Ovary (tissue), 10 donors: ENCODE measurements at regions of chr9 and their contacts with region 1.

Region 1: GRCh38 chr9:69027355-69028096 is 8.0 kb upstream of the FXN start:
- DNase-seq: no peak
- H3K4me3 ChIP-seq: no peak overlapping the region
- H3K27ac ChIP-seq: no peak overlapping the region
- H3K4me1 ChIP-seq: no peaks in the 10 kb centered on the region
- H3K27me3 ChIP-seq: no peaks in the 10 kb centered on the region
- CTCF ChIP-seq: peak; percentile 25 to 30 (median 29)
- EP300 ChIP-seq: no peak
- POLR2A ChIP-seq: no peak

Region 2: GRCh38 chr9:68584189-68585033 is 443.1 kb before region 1 on chr9:
- intact Hi-C with region 1: loop called in 1 of 4 experiments (anchors 10 kb)
- DNase-seq: peak; percentile 59 to 78 (median 74)
- H3K4me3 ChIP-seq: no peak overlapping the region
- H3K27ac ChIP-seq: no peak overlapping the region
- H3K4me1 ChIP-seq: no peaks in the 10 kb centered on the region
- H3K27me3 ChIP-seq: no peaks in the 10 kb centered on the region
- CTCF ChIP-seq: peak; percentile 53 to 66 (median 66)
- EP300 ChIP-seq: no peak
- POLR2A ChIP-seq: no peak

Region 3: GRCh38 chr9:68895741-68896478 is 131.6 kb before region 1 on chr9:
- intact Hi-C with region 1: loop called in 1 of 4 experiments (anchors 5 kb)
- DNase-seq: no peak
- H3K4me3 ChIP-seq: no peak overlapping the region
- H3K27ac ChIP-seq: peak overlapping the region in 1 of 2 donors; percentile 56
- H3K4me1 ChIP-seq: peaks cover 6% of the 10 kb centered on the region
- H3K27me3 ChIP-seq: no peaks in the 10 kb centered on the region
- CTCF ChIP-seq: no peak
- EP300 ChIP-seq: no peak
- POLR2A ChIP-seq: no peak

Region 4: GRCh38 chr9:68999393-69000105 is 28.0 kb before region 1 on chr9:
- intact Hi-C with region 1: loop called in 1 of 4 experiments (anchors 2 kb)
- DNase-seq: peak in 4 of 5 donors; percentile 24 to 65 (median 35)
- H3K4me3 ChIP-seq: no peak overlapping the region
- H3K27ac ChIP-seq: no peak overlapping the region
- H3K4me1 ChIP-seq: no peaks in the 10 kb centered on the region
- H3K27me3 ChIP-seq: no peaks in the 10 kb centered on the region
- CTCF ChIP-seq: peak in 2 of 3 donors; percentile 28 to 47
- EP300 ChIP-seq: no peak
- POLR2A ChIP-seq: no peak